Activated CD8-positive, alpha-beta T cell treated with anti-CD3 and anti-CD28 coated beads for 36 hours (primary cell): ENCODE measurements at regions of chr18 and their contacts with region 1.

Region 1: GRCh38 chr18:10560450-10561045 is 34.7 kb downstream of the NAPG start:
- DNase-seq: peak; percentile 82
- ATAC-seq: peak; percentile 66
- H3K4me3 Mint-ChIP-seq: no peak overlapping the region
- H3K27ac Mint-ChIP-seq: no peak overlapping the region
- H3K4me1 Mint-ChIP-seq: peaks cover 6% of the 10 kb centered on the region
- H3K27me3 Mint-ChIP-seq: no peaks in the 10 kb centered on the region
- CTCF ChIP-seq: peak; percentile 83

Region 2: DNA sequence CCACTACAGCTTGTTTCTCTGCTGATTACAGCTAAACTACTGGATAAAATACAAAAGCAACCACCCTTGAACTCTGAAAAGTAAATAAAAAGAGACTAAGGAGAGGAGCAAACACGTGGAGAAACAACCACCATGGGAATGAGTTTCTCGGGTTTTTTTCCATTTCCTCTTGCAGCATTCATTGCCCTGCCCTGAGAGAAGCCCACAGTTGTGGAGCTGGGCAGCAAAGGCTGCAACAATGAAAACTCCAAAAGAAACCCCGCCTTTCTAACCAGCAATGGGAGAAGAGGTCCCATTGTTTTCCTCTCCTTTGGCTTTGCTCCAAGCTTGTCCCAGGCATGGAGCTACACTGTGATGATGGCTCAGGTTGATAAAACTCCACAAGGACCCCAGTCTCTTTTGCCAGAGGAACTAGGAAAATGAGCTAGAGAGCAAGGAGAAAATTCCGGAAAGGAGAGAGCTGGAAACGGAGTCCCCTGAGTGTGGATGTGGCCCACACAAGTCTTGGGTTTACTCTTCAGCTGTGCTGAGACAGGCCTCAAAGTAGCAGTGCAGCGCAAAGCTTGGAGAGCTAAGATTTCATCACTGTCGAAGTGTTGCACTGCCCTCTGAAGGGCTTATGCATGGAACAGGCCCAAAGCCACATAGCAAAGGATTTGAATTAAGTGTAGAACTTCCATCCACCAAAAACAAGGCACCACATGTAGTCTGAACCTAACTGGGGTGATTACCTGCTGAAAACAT is 13.8 kb before region 1 on chr18:
- CTCF ChIA-PET with region 1: interaction called, 14 read pairs
- POLR2A ChIA-PET with region 1: interaction called, 3 read pairs
- intact Hi-C with region 1: no loop called
- DNase-seq: no peak
- ATAC-seq: no peak
- H3K4me3 Mint-ChIP-seq: no peak overlapping the region
- H3K27ac Mint-ChIP-seq: no peak overlapping the region
- H3K4me1 Mint-ChIP-seq: no peaks in the 10 kb centered on the region
- H3K27me3 Mint-ChIP-seq: no peaks in the 10 kb centered on the region
- CTCF ChIP-seq: no peak

Region 3: DNA sequence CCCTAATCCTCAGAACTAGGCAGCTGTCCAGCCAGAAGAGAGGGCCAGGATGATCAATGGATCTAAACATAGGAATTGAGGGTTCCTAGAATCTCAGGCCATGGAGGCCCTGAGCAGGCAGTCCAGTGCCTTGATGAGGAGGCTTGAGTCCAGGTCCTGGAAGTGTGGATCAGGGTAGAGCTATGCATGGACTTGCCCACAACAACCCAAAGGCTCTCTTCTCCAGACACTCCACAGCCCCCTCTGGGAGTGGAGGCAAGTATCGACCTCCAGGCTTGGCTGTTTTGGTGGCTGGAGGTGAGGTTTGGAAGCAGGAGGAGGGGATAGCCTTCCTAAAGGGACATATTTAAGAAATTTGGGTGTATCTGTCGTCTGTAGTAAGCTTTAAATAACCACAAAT is 11.0 kb after region 1 on chr18:
- CTCF ChIA-PET with region 1: interaction called, 12 read pairs
- POLR2A ChIA-PET with region 1: no interaction called
- intact Hi-C with region 1: no loop called
- DNase-seq: no peak
- ATAC-seq: no peak
- H3K4me3 Mint-ChIP-seq: no peak overlapping the region
- H3K27ac Mint-ChIP-seq: no peak overlapping the region
- H3K4me1 Mint-ChIP-seq: no peaks in the 10 kb centered on the region
- H3K27me3 Mint-ChIP-seq: no peaks in the 10 kb centered on the region
- CTCF ChIP-seq: no peak